Calu3 (cell line): ENCODE measurements at regions of chr19 and their contacts with region 1.

Region 1: DNA sequence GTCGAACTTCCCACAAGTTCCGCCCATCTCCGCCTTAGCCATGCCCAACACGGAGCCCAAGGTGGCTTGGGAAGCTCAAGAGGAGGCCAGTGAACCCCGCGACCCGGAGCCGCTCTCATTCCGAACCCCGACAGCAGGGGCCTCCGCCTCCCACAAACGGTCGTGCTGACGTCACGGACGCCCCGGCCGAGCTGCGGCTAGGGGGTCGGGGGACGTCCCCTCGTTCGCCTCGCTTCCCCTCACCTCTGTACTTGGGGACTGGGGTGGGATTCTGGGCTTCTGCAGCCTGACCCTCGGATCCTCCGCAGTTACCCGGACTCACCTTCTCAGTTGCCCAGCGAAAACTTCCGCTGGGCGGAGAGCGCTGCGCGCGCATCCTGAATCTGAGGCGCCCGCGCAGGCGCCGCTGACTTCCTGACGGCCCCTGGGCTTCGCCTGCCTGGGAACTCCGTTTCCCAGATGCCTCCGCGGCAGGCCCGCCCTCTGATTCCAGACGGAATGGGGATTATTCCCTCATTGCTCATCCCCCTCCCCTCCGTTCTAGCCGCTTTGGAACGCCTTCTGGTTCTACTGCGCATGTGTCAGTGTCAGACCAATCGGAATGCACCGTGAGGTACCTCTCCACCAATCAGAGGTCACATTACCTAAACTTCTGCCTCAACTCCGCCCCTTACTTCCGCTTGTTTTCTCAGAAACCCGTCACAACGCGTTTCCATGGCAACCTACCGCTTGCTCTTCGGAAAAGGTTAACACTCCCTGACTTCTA is at the start of gene VRK3:
- DNase-seq: peak; percentile 99
- H3K4me3 Mint-ChIP-seq: peak within 1 kb of the TSS; percentile 99
- H3K27ac Mint-ChIP-seq: peak within 1 kb of the TSS; percentile 100
- H3K4me1 Mint-ChIP-seq: peaks cover 47% of the 10 kb centered on the region
- H3K27me3 Mint-ChIP-seq: no peaks in the 10 kb centered on the region
- CTCF ChIP-seq: no peak
- total RNA-seq, gene VRK3: 68.4 and 74.5 TPM in 2 replicates

Region 2: GRCh38 chr19:49946418-49946817 is 78.8 kb before region 1 on chr19:
- CTCF ChIA-PET with region 1: no interaction called
- intact Hi-C with region 1: loop called (anchors 2 kb)
- DNase-seq: no peak
- H3K4me3 Mint-ChIP-seq: no peak overlapping the region
- H3K27ac Mint-ChIP-seq: no peak overlapping the region
- H3K4me1 Mint-ChIP-seq: peaks cover 9% of the 10 kb centered on the region
- H3K27me3 Mint-ChIP-seq: peaks cover 56% of the 10 kb centered on the region
- CTCF ChIP-seq: no peak